ENCODE measurements at regions of chr11 and their contacts with region 1.

Region 1: DNA sequence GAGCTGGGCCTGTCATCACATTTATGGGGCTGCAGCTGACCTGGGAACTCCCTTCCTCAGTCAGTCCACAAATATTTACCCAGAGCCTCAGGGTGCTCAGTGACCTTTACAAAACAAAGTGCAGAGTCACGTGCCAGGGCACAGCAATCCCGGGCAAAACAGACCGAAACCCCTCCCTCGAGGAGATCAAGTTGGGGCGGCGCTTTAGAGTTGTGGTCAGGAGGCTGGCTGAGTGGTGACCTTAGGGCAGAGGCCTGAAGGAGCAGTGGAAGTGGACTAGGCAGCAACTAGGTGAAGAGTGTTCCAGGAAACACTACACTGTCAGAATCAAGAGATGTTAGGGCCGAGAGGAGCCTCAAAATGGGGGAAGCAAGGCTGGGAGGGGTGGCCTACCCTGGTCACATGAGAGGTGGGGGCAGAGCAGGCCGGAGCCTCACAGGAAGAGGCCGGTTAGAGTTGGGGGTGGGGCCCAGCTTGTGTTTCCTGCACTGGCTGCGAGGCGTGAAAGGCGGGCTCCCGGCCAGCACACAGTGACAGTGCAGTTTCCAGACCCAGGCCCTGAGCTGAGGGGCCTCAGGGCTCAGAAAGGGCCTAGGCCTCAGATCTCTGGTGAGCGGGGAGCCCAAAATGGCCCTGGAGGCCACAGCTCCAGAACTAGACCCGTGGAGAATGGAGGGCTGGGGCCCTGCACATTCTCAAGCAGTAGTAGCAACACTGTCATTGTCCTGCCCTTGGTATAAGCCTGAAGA is 3.7 kb upstream of the NEAT1 start:
- DNase-seq: peak; percentile 86
- ATAC-seq: peak; percentile 39
- H3K4me3 Mint-ChIP-seq: peak overlapping the region; percentile 100
- H3K27ac Mint-ChIP-seq: peak overlapping the region; percentile 100
- H3K4me1 Mint-ChIP-seq: peaks cover 46% of the 10 kb centered on the region
- H3K27me3 Mint-ChIP-seq: peaks cover 2% of the 10 kb centered on the region

Region 2: DNA sequence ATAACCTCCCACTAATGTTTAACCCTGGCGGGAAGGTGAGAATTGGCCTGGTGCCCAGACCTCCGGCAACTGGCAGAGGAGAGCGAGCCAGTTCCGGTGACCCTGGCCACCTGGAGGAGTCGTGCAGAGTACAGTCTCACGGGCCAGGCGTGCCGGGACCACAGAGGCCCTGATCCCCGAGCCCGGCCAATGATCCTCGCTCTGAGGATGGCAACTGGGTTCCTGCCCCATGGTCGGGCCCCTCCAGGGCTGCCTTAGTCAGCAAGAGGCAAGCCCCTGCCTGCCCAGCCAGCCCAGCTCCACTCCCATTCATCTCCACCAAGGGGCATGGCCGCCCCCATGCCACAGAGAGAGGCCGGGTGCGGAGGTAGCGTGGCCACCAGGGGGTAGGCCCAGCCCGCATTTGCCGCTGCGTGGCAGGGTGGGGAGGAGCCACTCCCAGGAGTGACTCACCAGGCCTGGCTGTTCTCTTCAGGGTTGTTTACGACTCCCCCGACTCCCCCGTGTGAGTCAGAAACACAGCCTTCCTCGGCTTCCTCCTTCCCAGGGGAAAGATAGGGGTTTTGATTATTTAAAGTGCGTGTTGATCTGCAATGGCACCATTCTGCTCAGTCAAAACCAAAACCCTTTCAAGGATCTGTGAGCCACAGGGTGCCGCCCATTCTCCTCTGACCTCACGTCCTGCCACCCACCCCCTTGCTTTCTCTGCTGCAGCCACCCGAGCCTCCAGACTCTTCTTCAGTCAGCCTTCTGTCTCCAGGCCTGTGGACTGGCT is 36.7 kb before region 1 on chr11 and contains the start of gene SLC25A45:
- POLR2A ChIA-PET with region 1: interaction called, 129 read pairs
- DNase-seq: peak; percentile 92
- ATAC-seq: peak; percentile 84
- H3K4me3 Mint-ChIP-seq: peak within 1 kb of the TSS; percentile 89
- H3K27ac Mint-ChIP-seq: peak within 1 kb of the TSS; percentile 96
- H3K4me1 Mint-ChIP-seq: peaks cover 34% of the 10 kb centered on the region
- H3K27me3 Mint-ChIP-seq: no peaks in the 10 kb centered on the region
- total RNA-seq, gene SLC25A45: 25.5 to 29.6 TPM

Region 3: DNA sequence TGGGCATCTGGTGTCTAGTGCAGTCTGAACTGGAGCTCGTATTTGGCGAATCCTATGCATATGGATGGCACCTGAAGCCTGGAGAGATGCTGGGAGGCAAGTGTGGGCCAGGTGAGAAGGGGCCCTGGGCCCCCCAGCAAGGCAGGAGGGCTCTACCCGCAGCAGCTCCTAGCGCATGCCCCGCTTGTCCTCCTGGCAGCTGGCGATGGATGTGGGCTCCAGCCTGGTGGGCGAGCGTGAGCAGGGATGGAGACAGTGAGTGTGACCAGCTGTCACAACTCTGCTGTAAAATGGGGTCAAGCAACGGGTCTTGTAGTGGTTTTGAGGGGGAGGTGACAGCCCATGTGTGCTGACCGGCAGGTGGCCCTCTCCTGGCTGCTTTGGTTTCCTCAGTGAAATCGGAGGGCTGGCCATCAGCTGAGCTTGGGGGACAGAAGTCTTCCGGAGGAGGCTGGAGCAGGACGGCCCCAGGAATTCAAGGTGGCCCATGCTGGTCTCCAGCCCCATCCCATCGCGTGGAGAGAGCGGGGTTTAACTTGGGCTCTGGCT is 20.4 kb before region 1 on chr11:
- POLR2A ChIA-PET with region 1: no interaction called
- DNase-seq: no peak
- ATAC-seq: no peak
- H3K4me3 Mint-ChIP-seq: no peak overlapping the region
- H3K27ac Mint-ChIP-seq: no peak overlapping the region
- H3K4me1 Mint-ChIP-seq: peaks cover 1% of the 10 kb centered on the region
- H3K27me3 Mint-ChIP-seq: no peaks in the 10 kb centered on the region

Region 4: GRCh38 chr11:65432686-65433582 is 14.0 kb after region 1 on chr11:
- POLR2A ChIA-PET with region 1: interaction called, 202 read pairs
- DNase-seq: no peak
- ATAC-seq: no peak
- H3K4me3 Mint-ChIP-seq: peak overlapping the region; percentile 23
- H3K27ac Mint-ChIP-seq: no peak overlapping the region
- H3K4me1 Mint-ChIP-seq: peaks cover 71% of the 10 kb centered on the region
- H3K27me3 Mint-ChIP-seq: no peaks in the 10 kb centered on the region

Region 5: GRCh38 chr11:65440831-65441499 is 22.1 kb after region 1 on chr11:
- POLR2A ChIA-PET with region 1: interaction called, 14 read pairs
- DNase-seq: peak; percentile 22
- ATAC-seq: peak; percentile 11
- H3K4me3 Mint-ChIP-seq: peak overlapping the region; percentile 42
- H3K27ac Mint-ChIP-seq: peak overlapping the region; percentile 74
- H3K4me1 Mint-ChIP-seq: peaks cover 44% of the 10 kb centered on the region
- H3K27me3 Mint-ChIP-seq: no peaks in the 10 kb centered on the region

Region 6: GRCh38 chr11:65471410-65471762 is 52.5 kb after region 1 on chr11:
- POLR2A ChIA-PET with region 1: interaction called, 147 read pairs
- DNase-seq: no peak
- ATAC-seq: peak; percentile 32
- H3K4me3 Mint-ChIP-seq: no peak overlapping the region
- H3K27ac Mint-ChIP-seq: peak overlapping the region; percentile 90
- H3K4me1 Mint-ChIP-seq: peaks cover 11% of the 10 kb centered on the region
- H3K27me3 Mint-ChIP-seq: no peaks in the 10 kb centered on the region

Region 7: GRCh38 chr11:65477149-65477965 is 58.5 kb after region 1 on chr11:
- POLR2A ChIA-PET with region 1: interaction called, 147 read pairs
- DNase-seq: peak; percentile 92
- ATAC-seq: peak; percentile 85
- H3K4me3 Mint-ChIP-seq: peak overlapping the region; percentile 100
- H3K27ac Mint-ChIP-seq: peak overlapping the region; percentile 98
- H3K4me1 Mint-ChIP-seq: peaks cover 9% of the 10 kb centered on the region
- H3K27me3 Mint-ChIP-seq: peaks cover 4% of the 10 kb centered on the region

Region 8: GRCh38 chr11:65497141-65498041 is 78.5 kb after region 1 on chr11:
- POLR2A ChIA-PET with region 1: interaction called, 2,884 read pairs
- DNase-seq: peak; percentile 99
- ATAC-seq: peak; percentile 79
- H3K4me3 Mint-ChIP-seq: no peak overlapping the region
- H3K27ac Mint-ChIP-seq: no peak overlapping the region
- H3K4me1 Mint-ChIP-seq: peaks cover 23% of the 10 kb centered on the region
- H3K27me3 Mint-ChIP-seq: no peaks in the 10 kb centered on the region

Region 9: DNA sequence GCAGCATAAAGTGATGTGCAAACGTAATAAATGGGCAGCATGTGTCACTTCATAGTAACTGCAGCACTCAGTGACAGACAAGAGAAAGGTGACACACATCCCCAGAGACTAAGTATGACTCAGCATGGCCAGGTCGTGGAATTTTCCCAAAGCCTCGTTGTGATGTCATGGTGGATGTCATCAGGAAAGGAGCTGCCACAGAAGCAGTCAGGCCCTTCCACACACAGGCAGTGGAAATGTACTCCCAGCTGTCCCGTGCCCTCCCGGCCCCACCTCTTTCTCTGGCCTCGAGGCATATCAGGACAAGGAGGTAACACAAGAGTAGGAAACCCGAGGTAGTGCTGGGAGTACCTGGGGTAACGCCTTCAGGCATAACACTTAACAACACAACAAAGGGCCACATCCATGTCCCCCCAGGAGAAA is 1531.2 kb after region 1 on chr11:
- POLR2A ChIA-PET with region 1: no interaction called
- DNase-seq: no peak
- ATAC-seq: no peak
- H3K4me3 Mint-ChIP-seq: no peak overlapping the region
- H3K27ac Mint-ChIP-seq: no peak overlapping the region
- H3K4me1 Mint-ChIP-seq: no peaks in the 10 kb centered on the region
- H3K27me3 Mint-ChIP-seq: no peaks in the 10 kb centered on the region